Spleen (tissue), 13 donors: ENCODE measurements at regions of chr19 and their contacts with region 1.

Region 1: GRCh38 chr19:42529248-42529764 is 1.0 kb upstream of the CEACAM1 start:
- DNase-seq: peak; percentile 89
- H3K4me3 ChIP-seq: peak overlapping the region in 5 of 8 donors; percentile 23 to 60 (median 32)
- H3K27ac ChIP-seq: peak overlapping the region; percentile 36 to 88 (median 80)
- H3K4me1 ChIP-seq: peaks cover 5 to 53% (median 31%) of the 10 kb centered on the region in 6 donors
- H3K27me3 ChIP-seq: no peaks in the 10 kb centered on the region
- CTCF ChIP-seq: peak; percentile 92 to 99 (median 95)
- POLR2A ChIP-seq: no peak

Region 2: GRCh38 chr19:42450314-42450934 is 78.9 kb before region 1 on chr19:
- intact Hi-C with region 1: loop called (anchors 2 kb)
- DNase-seq: peak; percentile 86
- H3K4me3 ChIP-seq: no peak overlapping the region
- H3K27ac ChIP-seq: peak overlapping the region in 6 of 8 donors; percentile 36 to 72 (median 52)
- H3K4me1 ChIP-seq: peaks cover 3 to 60% (median 22%) of the 10 kb centered on the region in 6 donors
- H3K27me3 ChIP-seq: no peaks in the 10 kb centered on the region
- CTCF ChIP-seq: peak; percentile 84 to 98 (median 93)
- POLR2A ChIP-seq: no peak